ENCODE measurements at regions of chr3 and their contacts with region 1.

Region 1: DNA sequence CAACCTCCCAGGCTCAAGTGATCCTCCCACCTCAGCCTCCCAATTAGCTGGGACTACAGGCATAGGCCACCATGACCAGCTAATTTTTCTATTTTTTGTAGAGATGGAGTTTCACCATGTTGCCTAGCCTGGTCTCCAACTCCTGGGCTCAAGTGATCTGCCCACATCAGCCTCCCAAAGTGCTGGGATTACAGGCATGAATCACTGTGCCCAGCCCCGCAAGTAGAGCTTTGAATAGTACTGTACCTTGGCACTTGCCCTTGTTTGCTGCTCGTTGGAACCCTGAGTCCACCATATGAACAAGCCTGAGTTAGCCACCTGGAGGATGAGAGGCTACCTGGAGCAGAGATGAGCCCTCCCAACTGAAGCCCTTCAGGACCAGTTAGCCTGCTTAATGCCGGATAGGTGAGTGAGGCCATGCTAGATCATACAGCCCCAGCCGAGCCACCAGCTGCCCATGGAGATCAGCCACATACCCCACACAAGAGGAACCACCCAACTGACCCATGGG is 267.9 kb downstream of the SHQ1 start:
- DNase-seq: no peak
- H3K4me3 ChIP-seq: no peak overlapping the region
- H3K27ac ChIP-seq: no peak overlapping the region
- H3K4me1 ChIP-seq: no peaks in the 10 kb centered on the region
- H3K27me3 ChIP-seq: no peaks in the 10 kb centered on the region
- CTCF ChIP-seq: no peak

Region 2: GRCh38 chr3:72152551-72153476 is 427.5 kb before region 1 on chr3:
- CTCF ChIA-PET with region 1: no interaction called
- POLR2A ChIA-PET with region 1: no interaction called
- intact Hi-C with region 1: no loop called
- DNase-seq: peak; percentile 50
- H3K4me3 ChIP-seq: peak overlapping the region; percentile 8
- H3K27ac ChIP-seq: peak overlapping the region; percentile 65
- H3K4me1 ChIP-seq: no peaks in the 10 kb centered on the region
- H3K27me3 ChIP-seq: no peaks in the 10 kb centered on the region
- CTCF ChIP-seq: no peak

Region 3: DNA sequence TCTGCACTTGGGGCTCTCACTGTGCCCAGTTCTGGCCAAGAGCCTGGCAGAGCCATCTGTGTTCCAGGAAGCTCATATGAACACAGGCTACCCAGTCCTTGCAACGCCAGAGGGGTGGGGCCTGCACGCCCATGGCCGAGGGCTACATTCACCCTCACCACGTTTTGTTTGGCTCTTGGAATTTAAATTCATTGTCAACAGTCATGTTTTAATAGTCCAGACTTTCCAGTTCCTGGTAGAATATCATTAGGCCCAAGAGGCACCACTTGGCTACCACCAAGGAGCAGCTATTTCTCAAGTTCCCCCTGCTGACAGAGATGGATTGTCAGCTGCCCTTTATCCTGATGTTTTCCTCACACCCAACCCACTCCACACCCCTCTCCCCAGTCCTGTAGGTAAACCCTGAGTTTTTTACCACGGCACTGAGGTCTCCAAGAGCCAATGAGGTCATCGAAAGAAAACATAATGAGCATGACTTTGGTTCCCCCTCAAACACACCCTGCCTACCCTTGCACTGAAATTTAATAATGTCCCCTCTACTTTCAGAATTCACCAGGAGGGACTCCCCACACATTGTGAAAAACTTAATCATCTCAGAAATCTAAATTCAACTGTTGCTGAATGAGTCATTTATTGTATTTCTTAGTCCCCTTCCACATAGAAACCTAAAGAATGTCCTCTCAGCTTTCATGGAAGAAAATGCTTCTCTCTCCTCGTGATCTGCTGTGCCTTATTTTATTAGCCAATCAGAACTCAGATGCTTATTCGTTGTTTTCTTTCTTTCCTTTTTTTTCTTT is 142.8 kb after region 1 on chr3:
- CTCF ChIA-PET with region 1: no interaction called
- POLR2A ChIA-PET with region 1: interaction called, 12 read pairs
- intact Hi-C with region 1: no loop called
- DNase-seq: peak; percentile 35
- H3K4me3 ChIP-seq: no peak overlapping the region
- H3K27ac ChIP-seq: peak overlapping the region; percentile 59
- H3K4me1 ChIP-seq: peaks cover 26% of the 10 kb centered on the region
- H3K27me3 ChIP-seq: no peaks in the 10 kb centered on the region
- CTCF ChIP-seq: no peak

Measured in A673 (cell line).